ENCODE measurements at regions of chr11 and their contacts with region 1.

Region 1: DNA sequence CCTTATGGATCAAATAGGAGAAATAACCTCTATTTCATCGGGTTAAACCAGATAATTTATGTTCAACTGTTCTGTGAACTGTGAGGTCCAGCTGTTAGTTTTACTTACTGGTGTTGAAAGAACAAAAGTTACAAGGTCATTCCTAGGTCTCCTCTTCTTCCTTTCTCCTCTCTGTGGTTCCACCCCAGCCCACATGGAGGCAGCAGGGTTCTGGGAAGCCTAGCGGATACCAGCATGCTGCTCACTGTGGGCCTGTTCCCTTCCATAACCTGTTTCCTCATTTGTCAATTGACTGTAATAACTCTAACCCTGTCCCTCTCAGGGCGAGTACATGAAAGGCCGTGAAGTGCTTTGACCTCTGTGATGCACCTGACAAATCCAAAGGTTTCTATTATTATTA is 27.8 kb downstream of the RELT start:
- DNase-seq: peak; percentile 77

Region 2: DNA sequence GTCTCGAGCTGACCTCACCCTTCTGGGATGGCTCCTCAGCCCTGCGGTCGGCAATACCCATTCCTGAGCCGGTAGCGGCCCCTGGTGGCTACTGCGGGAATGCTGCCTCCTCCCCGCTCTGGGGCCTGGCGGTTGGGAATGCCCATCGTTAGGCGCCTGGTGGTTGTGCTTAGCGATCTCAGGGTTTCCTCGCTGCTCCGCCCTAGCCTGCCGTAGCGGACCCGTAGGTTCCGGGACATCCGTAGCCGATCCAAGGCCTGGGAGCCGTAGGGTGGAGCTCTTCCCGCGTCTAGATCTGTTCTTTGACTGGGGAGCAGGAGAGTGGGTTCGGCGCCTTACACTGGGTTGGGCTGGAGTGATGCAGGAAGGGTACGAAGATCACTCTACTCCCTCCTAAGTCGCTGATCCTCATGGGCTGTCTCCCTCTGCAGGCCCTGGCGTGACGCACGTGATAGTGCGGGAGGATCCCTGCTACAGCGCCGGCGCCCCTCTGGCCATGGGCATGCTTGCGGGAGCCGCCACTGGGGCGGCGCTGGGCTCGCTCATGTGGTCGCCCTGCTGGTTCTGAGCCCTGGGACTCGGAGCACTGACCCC is 257.1 kb after region 1 on chr11:
- in situ Hi-C with region 1: loop called (anchors 25 kb)
- DNase-seq: peak; percentile 89